Right ventricle myocardium superior (tissue), 1 donor: ENCODE measurements at regions of chr19 and their contacts with region 1.

Region 1: DNA sequence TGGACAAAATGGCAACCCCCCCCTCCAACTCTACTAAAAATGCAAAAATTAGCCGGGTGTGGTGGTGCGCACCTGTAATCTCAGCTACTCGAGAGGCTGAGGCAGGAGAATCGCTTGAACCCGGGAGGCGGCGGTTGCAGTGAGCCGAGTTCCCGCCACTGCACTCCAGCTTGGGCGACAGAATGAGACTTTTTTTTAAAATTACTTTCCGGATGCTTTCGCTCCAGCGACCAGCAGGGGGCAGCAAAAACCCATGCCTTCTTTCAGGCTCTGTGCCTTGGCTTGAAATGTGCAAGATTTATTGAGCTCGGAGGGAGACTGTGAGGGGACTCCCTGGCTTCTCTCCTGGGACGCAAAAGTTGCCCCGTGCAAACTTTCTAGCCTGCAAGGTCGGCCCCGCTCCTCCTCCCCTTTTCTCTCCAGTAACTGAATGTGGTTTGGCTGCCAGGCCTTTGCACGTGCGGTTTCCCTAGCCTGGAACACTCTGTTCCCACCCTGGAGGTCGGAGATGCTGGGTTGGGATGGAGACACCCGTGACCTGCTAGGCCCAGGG is 61.4 kb upstream of the NFIC start:
- DNase-seq: peak; percentile 72
- ATAC-seq: peak; percentile 74

Region 2: GRCh38 chr19:3471954-3472655 is 167.2 kb after region 1 on chr19:
- intact Hi-C with region 1: loop called (anchors 5 kb)
- DNase-seq: no peak
- ATAC-seq: peak; percentile 69

Region 3: GRCh38 chr19:3526507-3527244 is 221.7 kb after region 1 on chr19:
- intact Hi-C with region 1: no loop called
- DNase-seq: no peak
- ATAC-seq: no peak